Body of pancreas (tissue), 4 donors: ENCODE measurements at regions of chr2 and their contacts with region 1.

Region 1: DNA sequence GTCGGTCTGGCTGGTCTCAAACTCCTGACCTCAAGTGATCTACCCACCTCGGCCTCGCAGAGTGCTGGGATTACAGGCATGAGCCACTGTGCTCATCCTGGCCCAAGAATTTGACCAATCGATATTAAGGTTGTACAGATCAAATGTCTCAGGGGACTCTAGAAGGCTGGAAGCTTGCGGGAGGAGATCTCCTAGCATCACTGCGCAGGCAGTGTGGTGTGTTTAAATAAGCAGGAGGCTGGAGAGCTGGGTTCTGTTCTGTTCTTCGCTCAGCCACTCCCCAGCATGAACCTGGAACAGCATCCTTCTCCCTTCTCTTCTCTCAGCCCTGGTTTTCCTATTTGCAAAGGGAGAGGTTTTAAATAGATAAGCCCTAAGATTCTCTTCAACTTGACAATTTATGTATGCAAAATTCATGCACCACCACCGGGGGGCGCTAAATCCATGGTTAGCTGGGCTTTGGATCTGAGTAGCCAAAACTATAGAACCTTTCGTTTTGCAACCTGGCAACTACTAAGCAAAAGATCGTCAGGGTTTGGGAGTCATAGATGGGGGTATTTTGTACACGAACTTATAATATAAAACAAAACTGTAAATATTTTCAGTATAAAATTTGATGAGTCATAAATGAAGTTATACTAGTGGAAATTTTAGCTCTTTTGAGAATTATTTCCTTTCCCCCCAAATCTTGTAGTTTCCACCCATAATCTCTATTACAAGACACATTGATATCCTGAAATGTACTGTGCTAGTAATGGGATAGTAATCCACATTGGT is 60.6 kb downstream of the SLC16A14 start:
- DNase-seq: peak; percentile 68 to 79 (median 71)
- ATAC-seq: no peak
- H3K4me3 ChIP-seq: no peak overlapping the region
- H3K27ac ChIP-seq: no peak overlapping the region
- H3K4me1 ChIP-seq: no peaks in the 10 kb centered on the region
- H3K27me3 ChIP-seq: no peaks in the 10 kb centered on the region
- CTCF ChIP-seq: peak; percentile 50 to 78 (median 72)
- POLR2A ChIP-seq: no peak

Region 2: GRCh38 chr2:229610333-229610732 is 397.8 kb before region 1 on chr2:
- intact Hi-C with region 1: no loop called
- DNase-seq: no peak
- ATAC-seq: no peak
- H3K4me3 ChIP-seq: no peak overlapping the region
- H3K27ac ChIP-seq: no peak overlapping the region
- H3K4me1 ChIP-seq: peaks cover 18% of the 10 kb centered on the region
- H3K27me3 ChIP-seq: no peaks in the 10 kb centered on the region
- CTCF ChIP-seq: no peak
- POLR2A ChIP-seq: no peak

Region 3: GRCh38 chr2:230097841-230098240 is 89.7 kb after region 1 on chr2:
- intact Hi-C with region 1: no loop called
- DNase-seq: no peak
- ATAC-seq: no peak
- H3K4me3 ChIP-seq: no peak overlapping the region
- H3K27ac ChIP-seq: no peak overlapping the region
- H3K4me1 ChIP-seq: no peaks in the 10 kb centered on the region
- H3K27me3 ChIP-seq: no peaks in the 10 kb centered on the region
- CTCF ChIP-seq: no peak
- POLR2A ChIP-seq: no peak

Region 4: DNA sequence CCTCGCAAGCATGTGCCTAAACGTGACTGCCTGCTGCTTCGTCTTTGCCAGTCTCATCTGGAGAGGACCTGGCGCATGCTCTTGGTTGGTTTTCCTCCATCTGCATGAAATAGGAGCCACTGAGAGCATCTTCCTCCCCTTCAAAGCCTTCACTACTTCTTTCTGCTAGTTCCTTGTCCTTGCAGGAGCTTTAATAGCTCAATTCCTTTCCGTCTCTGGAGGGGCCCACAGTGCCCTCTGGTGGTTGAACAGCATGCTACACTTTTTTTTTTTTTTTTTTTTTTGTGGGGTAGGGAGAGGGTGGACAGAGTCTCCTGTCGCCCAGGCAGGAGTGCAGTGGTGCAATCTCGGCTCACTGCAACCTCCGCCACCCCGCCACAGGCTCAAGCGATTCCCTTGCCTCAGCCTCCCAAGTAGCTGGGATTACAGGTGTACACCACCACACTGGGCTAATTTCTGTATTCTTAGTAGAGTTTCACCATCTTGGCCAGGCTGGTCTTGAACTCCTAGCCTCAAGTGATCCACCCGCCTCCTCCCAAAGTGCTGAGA is 152.1 kb after region 1 on chr2:
- intact Hi-C with region 1: loop called (anchors 10 kb)
- DNase-seq: peak; percentile 33 to 49 (median 42)
- ATAC-seq: peak; percentile 47
- H3K4me3 ChIP-seq: no peak overlapping the region
- H3K27ac ChIP-seq: no peak overlapping the region
- H3K4me1 ChIP-seq: no peaks in the 10 kb centered on the region
- H3K27me3 ChIP-seq: no peaks in the 10 kb centered on the region
- CTCF ChIP-seq: peak; percentile 47 to 81 (median 60)
- POLR2A ChIP-seq: no peak

Region 5: DNA sequence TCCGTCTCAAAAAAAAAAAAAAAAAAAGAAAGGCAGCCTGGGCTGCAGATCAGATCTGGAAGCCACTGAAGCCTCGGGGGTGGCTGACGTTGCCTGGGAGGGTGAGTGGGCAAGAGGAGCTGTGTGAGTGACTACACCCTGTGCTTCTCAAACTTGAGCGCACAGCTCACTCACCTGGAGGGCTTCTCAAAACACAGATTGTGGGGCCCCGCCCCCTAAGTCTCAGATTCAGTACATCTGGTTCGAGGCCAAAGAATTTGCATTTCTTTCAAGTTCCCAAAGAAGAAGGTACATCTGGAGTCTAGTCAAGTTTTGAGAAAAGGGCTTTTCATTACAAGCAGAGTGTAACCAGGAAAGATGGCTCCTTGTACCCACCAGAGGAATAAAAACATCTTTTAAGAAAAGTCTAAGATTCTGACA is 606.8 kb after region 1 on chr2:
- intact Hi-C with region 1: loop called (anchors 10 kb)
- DNase-seq: no peak
- ATAC-seq: no peak
- H3K4me3 ChIP-seq: no peak overlapping the region
- H3K27ac ChIP-seq: no peak overlapping the region
- H3K4me1 ChIP-seq: peaks cover 6% of the 10 kb centered on the region
- H3K27me3 ChIP-seq: no peaks in the 10 kb centered on the region
- CTCF ChIP-seq: no peak
- POLR2A ChIP-seq: no peak

Region 6: GRCh38 chr2:230842473-230842872 is 834.4 kb after region 1 on chr2:
- intact Hi-C with region 1: no loop called
- DNase-seq: no peak
- ATAC-seq: peak; percentile 42
- H3K4me3 ChIP-seq: no peak overlapping the region
- H3K27ac ChIP-seq: no peak overlapping the region
- H3K4me1 ChIP-seq: no peaks in the 10 kb centered on the region
- H3K27me3 ChIP-seq: no peaks in the 10 kb centered on the region
- CTCF ChIP-seq: no peak
- POLR2A ChIP-seq: no peak